AG04449 (cell line): ENCODE measurements at regions of chr11 and their contacts with region 1.

Region 1: DNA sequence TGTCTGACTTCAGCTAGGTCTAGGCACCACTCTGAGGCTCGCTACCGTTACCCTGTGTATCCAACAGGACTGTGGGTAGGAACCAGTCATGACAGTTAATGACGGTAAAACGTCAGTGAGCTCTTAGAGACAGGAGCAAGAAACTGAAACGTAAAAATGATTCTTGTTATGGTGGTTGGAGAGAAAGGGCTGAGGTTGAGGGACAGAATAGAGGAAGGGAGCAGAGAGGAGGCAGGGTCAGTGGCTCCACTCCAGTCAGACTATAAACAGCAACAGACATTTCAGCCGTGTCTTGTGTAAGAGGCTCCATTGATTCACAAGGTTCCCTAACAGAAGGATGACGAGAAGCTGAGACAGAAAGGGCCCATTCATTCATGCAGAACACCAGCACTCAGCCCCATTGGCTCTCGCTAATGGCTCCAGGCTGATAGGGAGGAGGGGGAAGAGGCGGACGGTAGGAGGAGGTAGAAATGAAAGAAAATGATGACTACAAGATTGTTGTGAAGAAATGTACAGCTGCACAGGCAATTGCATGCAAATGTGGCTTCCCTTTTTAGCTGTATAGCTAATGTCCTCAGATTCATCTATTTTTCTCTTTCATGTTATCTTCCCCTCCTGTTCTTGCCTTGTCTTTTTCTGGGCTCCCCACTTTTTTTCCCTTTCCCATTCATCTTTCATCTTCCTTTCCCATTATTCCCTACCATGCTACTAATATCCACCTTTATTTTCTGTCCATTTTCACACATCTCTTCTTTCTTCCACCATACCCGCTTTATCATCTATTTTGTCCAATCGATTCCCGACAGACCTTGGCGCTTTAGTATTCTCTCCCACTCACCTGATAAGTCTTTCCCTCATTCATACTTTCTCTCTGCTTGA is 34.3 kb downstream of the ETS1 start:
- DNase-seq: no peak
- H3K4me3 ChIP-seq: no peak overlapping the region
- CTCF ChIP-seq: no peak

Region 2: DNA sequence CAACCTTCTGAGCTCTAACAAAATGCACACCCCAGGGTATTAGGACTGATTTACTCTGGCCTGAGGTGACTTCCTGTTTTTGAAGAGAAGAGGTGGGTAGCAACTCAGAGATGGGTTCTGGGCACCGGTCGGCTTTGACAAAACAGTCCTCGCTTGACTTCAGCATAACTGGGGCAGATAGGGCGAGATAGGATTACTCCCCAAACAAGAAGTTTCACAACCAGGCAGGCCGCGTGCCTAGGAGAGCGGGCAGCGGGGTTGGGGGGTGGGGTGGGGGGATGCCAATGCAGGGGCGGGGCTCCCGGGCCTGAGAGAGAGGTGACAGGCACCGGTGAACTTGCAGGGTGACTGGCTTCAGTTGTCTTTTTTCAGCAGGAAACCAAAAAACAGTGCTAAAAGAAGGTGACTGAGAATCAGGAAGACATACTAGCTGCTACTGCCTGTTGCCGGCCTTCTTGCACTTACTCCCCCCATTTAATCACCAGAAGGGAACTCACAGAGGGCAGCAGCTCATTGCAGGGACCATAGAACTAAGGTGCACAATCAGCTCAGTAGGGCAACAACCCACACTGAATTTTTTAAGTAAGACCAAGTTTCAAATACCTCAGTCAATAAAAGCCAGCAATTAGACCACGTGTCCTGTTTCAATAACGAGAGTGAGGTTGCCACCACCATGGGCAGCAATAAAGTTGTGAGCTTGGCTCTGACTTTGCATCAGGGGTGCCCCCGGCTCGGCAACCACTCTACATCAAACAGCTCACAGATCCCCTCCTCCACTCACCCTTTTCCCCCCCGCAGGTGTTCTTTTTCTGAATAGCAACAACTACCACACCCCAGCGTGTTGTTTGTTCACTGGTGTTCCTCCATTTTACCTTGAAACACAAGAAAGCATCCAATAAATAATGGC is 71.5 kb after region 1 on chr11:
- CTCF ChIA-PET with region 1: interaction called, 54 read pairs
- POLR2A ChIA-PET with region 1: no interaction called
- DNase-seq: no peak
- H3K4me3 ChIP-seq: no peak overlapping the region
- CTCF ChIP-seq: no peak